ENCODE measurements at regions of chr2 and their contacts with region 1.

Region 1: GRCh38 chr2:152189622-152190495 is 14.3 kb upstream of the STAM2 start:
- DNase-seq: no peak
- ATAC-seq: peak; percentile 93
- H3K4me3 ChIP-seq: no peak overlapping the region
- H3K27ac ChIP-seq: no peak overlapping the region
- H3K4me1 ChIP-seq: no peaks in the 10 kb centered on the region
- H3K27me3 ChIP-seq: no peaks in the 10 kb centered on the region
- CTCF ChIP-seq: peak; percentile 85

Region 2: DNA sequence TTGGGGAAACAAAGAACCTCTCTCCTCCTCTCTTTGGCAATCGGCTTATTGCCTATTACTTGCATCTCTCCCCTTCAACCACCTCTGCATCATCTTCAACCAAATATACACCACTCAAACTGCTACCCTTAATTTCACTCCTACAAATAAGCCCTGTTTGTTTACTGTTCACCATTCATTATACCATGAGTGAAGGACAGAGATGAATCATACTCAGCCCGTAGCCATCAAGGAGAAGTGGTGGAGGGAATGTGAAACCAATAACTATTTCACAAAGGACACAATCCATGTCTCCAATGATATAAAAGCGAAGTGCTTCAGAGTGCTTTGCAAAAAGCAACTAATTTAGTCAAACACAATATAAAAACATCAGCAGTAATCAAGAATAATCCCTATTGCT is 167.8 kb before region 1 on chr2:
- CTCF ChIA-PET with region 1: no interaction called
- POLR2A ChIA-PET with region 1: no interaction called
- in situ Hi-C with region 1: no loop called
- intact Hi-C with region 1: no loop called
- DNase-seq: no peak
- ATAC-seq: no peak
- H3K4me3 ChIP-seq: no peak overlapping the region
- H3K27ac ChIP-seq: no peak overlapping the region
- H3K4me1 ChIP-seq: no peaks in the 10 kb centered on the region
- H3K27me3 ChIP-seq: peaks cover 9% of the 10 kb centered on the region
- CTCF ChIP-seq: no peak

Region 3: DNA sequence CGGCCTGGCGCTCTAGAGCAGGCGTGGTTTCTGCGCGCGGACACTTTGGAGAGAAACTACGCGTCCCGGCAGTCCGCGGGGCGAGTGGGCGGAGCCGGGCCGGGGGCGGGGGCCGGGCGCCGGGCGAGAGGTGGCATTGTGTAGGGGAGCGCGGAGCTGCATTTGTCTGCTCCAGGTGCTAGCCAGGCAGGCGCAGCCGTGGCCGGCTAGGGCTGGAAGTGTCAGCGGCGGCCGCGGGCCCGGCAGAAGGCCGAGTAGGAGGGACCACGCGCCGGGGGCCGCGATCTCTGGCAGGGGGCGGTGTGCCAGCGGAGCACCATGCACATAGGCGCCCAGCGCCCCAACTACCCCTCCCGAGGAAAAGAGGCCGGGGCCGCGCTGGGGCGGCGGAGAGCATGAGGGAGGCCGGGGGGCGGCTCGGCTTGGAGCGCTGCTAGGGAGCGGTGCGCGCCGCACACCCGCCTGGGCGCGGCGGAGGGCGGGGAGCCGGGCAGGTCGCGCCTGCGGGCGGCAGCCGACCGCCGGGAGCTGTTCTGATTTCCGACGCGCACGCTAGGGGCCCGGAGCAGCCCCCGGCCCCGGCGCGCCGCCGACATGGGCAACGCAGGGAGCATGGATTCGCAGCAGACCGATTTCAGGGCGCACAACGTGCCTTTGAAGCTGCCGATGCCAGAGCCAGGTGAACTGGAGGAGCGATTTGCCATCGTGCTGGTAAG is 145.3 kb after region 1 on chr2 and contains the start of gene FMNL2:
- CTCF ChIA-PET with region 1: no interaction called
- POLR2A ChIA-PET with region 1: no interaction called
- in situ Hi-C with region 1: no loop called
- intact Hi-C with region 1: loop called (anchors 5 kb)
- DNase-seq: no peak
- ATAC-seq: peak; percentile 92
- H3K4me3 ChIP-seq: peak within 1 kb of the TSS; percentile 75 to 88
- H3K27ac ChIP-seq: peak within 1 kb of the TSS; percentile 88
- H3K4me1 ChIP-seq: peaks cover 13% of the 10 kb centered on the region
- H3K27me3 ChIP-seq: no peaks in the 10 kb centered on the region
- CTCF ChIP-seq: peak; percentile 29; the same call in 1 of the 2 replicates
- total RNA-seq, gene FMNL2: 33.6 TPM

Region 4: DNA sequence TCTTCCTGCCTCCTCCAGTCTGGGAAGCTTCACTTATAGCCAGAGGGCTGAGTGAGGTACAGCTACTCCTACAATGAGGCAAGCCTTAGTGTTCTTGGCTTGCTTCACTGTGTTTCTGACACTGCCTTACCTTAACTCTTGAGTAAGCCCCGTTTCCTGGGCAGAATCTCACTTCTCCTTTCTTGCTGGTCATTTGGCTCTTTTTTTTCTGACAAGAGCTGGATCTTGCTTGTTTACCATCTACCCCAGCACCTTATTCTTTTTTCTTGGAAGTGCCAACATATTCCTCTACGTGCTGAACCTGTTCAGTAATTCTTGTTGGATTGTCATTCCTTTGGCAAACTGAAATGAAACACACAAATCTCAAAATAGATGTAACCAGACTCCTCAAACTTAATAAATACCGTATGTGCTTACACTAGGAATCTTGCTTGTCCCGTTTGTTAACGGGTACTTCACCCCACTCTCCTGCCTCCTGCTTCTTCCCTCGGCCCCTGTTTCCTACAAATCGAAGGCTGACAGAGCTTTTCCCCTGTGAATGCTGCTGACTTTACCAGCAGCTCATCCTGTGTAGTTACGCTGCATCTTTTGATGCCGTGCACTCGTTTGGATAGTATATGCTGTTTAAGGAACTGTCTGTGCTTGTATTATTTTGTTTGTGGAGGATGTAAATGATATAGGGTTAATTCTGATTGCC is 277.3 kb after region 1 on chr2:
- CTCF ChIA-PET with region 1: no interaction called
- POLR2A ChIA-PET with region 1: no interaction called
- in situ Hi-C with region 1: no loop called
- intact Hi-C with region 1: loop called (anchors 5 kb)
- DNase-seq: no peak
- ATAC-seq: peak; percentile 77
- H3K4me3 ChIP-seq: peak overlapping the region; percentile 15 to 42
- H3K27ac ChIP-seq: peak overlapping the region; percentile 89
- H3K4me1 ChIP-seq: peaks cover 62% of the 10 kb centered on the region
- H3K27me3 ChIP-seq: no peaks in the 10 kb centered on the region
- CTCF ChIP-seq: no peak

Region 5: GRCh38 chr2:152542995-152543481 is 353.2 kb after region 1 on chr2:
- CTCF ChIA-PET with region 1: no interaction called
- POLR2A ChIA-PET with region 1: no interaction called
- in situ Hi-C with region 1: no loop called
- intact Hi-C with region 1: no loop called
- DNase-seq: peak; percentile 85
- ATAC-seq: peak; percentile 93
- H3K4me3 ChIP-seq: no peak overlapping the region
- H3K27ac ChIP-seq: peak overlapping the region; percentile 48
- H3K4me1 ChIP-seq: peaks cover 20% of the 10 kb centered on the region
- H3K27me3 ChIP-seq: no peaks in the 10 kb centered on the region
- CTCF ChIP-seq: no peak